ENCODE measurements at regions of chr1 and their contacts with region 1.

Region 1: GRCh38 chr1:234579967-234580366 is 30.0 kb downstream of the IRF2BP2 start:
- DNase-seq: no peak
- ATAC-seq: no peak
- H3K4me3 ChIP-seq: no peak overlapping the region
- H3K27ac ChIP-seq: no peak overlapping the region
- H3K4me1 ChIP-seq: peaks cover 5% of the 10 kb centered on the region
- H3K27me3 ChIP-seq: no peaks in the 10 kb centered on the region

Region 2: GRCh38 chr1:234544087-234544579 is 35.8 kb before region 1 on chr1:
- intact Hi-C with region 1: loop called in 2 of 4 experiments (anchors 5 to 10 kb)
- DNase-seq: peak in 2 of 3 donors; percentile 59 to 77
- ATAC-seq: peak; percentile 69 to 72
- H3K4me3 ChIP-seq: no peak overlapping the region
- H3K27ac ChIP-seq: peak overlapping the region; percentile 96
- H3K4me1 ChIP-seq: peaks cover 15% of the 10 kb centered on the region
- H3K27me3 ChIP-seq: no peaks in the 10 kb centered on the region

Region 3: DNA sequence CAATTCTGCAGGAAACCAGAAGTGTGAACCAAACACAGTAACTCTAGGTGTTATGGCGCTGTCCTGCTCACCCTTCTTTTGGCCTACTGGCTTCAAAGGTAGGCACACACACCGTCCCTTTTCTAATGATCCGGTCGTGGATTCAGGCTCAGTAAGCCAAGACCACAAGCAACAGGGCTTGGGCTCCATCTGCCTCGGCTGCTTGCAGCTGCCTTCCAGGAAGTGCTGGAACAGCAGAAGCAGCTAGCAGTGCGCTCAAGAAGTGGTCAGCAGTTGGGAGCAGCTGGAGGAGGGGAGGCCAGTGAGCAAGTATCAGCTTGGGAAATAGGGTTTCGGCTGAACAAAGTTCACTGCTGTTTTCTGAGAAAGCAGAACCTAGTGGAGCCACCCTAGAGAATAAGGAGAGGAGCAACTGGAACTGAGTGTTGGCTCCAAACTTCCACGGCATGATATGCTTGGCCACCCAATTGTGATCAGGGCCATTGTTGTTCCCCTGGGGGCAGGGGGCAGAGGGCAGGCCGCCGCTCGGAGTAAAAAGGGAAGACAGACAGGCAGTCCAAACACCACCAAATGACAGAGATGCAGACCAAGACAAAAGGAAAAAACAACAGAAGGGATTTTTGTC is 375.3 kb after region 1 on chr1:
- intact Hi-C with region 1: no loop called
- DNase-seq: peak; percentile 83 to 91 (median 90)
- ATAC-seq: peak; percentile 90 to 91
- H3K4me3 ChIP-seq: no peak overlapping the region
- H3K27ac ChIP-seq: peak overlapping the region; percentile 53
- H3K4me1 ChIP-seq: peaks cover 6% of the 10 kb centered on the region
- H3K27me3 ChIP-seq: no peaks in the 10 kb centered on the region